Calu3 (cell line): ENCODE measurements at regions of chr13 and their contacts with region 1.

Region 1: DNA sequence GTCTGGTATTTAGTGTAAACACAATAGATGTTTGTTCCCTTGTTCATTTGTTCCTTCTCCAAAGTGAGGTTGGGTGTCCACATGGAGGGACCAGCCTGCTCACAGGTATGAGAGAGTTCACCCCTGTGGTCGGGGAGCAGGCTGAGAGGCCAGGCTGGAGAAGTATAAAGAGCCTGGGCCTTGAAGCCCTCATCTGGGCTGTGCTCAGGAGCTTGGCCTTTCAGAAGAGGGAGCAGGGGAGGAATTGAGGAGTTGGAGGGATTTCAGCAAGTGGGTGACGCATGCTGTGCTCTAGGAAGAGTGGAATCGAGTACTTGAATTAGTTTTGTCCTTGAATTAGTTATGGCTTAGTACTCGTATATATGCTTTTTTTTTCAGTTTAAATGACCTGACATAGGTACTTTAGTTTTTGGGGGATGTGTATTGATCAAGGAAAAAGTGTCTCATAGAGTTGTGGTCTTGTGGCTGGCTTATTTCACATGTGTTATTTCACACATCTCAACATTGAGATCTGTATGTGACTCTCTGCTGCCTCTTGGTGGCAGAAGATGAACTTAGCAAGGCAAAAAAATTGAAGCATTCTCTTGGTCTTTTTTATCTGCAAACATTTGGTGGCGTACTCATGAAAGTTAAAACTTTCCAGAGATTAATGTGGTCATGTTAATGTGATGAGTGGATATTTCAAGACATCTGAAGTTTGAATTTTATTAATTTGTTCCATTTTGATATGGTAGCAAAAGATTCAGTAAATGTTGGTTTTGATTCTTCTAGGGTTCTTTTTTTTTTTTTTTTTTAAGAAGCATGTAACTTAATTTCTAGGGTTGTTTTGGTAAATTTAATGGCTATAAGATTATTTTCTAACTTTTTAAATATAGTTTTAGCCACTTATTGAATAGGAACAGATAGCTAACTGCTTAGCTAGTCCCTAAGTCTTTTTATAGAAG is 54.3 kb downstream of the SLAIN1 start:
- DNase-seq: peak; percentile 7
- H3K4me3 Mint-ChIP-seq: no peak overlapping the region
- H3K27ac Mint-ChIP-seq: no peak overlapping the region
- H3K4me1 Mint-ChIP-seq: no peaks in the 10 kb centered on the region
- H3K27me3 Mint-ChIP-seq: no peaks in the 10 kb centered on the region
- CTCF ChIP-seq: no peak

Region 2: GRCh38 chr13:77595166-77595810 is 156.5 kb before region 1 on chr13:
- CTCF ChIA-PET with region 1: interaction called, 6 read pairs
- intact Hi-C with region 1: loop called (anchors 1 kb)
- DNase-seq: no peak
- H3K4me3 Mint-ChIP-seq: no peak overlapping the region
- H3K27ac Mint-ChIP-seq: no peak overlapping the region
- H3K4me1 Mint-ChIP-seq: no peaks in the 10 kb centered on the region
- H3K27me3 Mint-ChIP-seq: no peaks in the 10 kb centered on the region
- CTCF ChIP-seq: no peak